CD14-positive monocyte (primary cell): ENCODE measurements at regions of chr19 and their contacts with region 1.

Region 1: GRCh38 chr19:44777715-44778347 is at the start of gene CBLC:
- DNase-seq: no peak
- H3K4me3 ChIP-seq: no peak within 1 kb of the TSS
- H3K4me3 Mint-ChIP-seq: peak within 1 kb of the TSS in 1 of 2 donors; percentile 60
- H3K27ac ChIP-seq: no peak within 1 kb of the TSS
- H3K27ac Mint-ChIP-seq: no peak within 1 kb of the TSS
- H3K4me1 ChIP-seq: no peaks in the 10 kb centered on the region
- H3K4me1 Mint-ChIP-seq: no peaks in the 10 kb centered on the region
- H3K27me3 ChIP-seq: peaks cover 0 to 7% of the 10 kb centered on the region in 2 donors
- H3K27me3 Mint-ChIP-seq: peaks cover 0 to 20% (median 5%) of the 10 kb centered on the region in 3 donors
- CTCF ChIP-seq: no peak
- polyA plus RNA-seq, gene CBLC: not detected

Region 2: GRCh38 chr19:44702551-44703176 is 75.2 kb before region 1 on chr19:
- intact Hi-C with region 1: loop called in 1 of 2 experiments (anchors 5 kb)
- DNase-seq: no peak
- H3K4me3 ChIP-seq: no peak overlapping the region
- H3K4me3 Mint-ChIP-seq: no peak overlapping the region
- H3K27ac ChIP-seq: no peak overlapping the region
- H3K27ac Mint-ChIP-seq: peak overlapping the region in 1 of 7 donors; percentile 30
- H3K4me1 ChIP-seq: no peaks in the 10 kb centered on the region
- H3K4me1 Mint-ChIP-seq: no peaks in the 10 kb centered on the region
- H3K27me3 ChIP-seq: peaks cover 0 to 2% of the 10 kb centered on the region in 2 donors
- H3K27me3 Mint-ChIP-seq: peaks cover 5 to 8% (median 6%) of the 10 kb centered on the region in 3 donors
- CTCF ChIP-seq: no peak

Region 3: GRCh38 chr19:44968118-44968517 is 190.3 kb after region 1 on chr19:
- intact Hi-C with region 1: no loop called
- DNase-seq: no peak
- H3K4me3 ChIP-seq: no peak overlapping the region
- H3K4me3 Mint-ChIP-seq: no peak overlapping the region
- H3K27ac ChIP-seq: no peak overlapping the region
- H3K27ac Mint-ChIP-seq: no peak overlapping the region
- H3K4me1 ChIP-seq: no peaks in the 10 kb centered on the region
- H3K4me1 Mint-ChIP-seq: no peaks in the 10 kb centered on the region
- H3K27me3 ChIP-seq: no peaks in the 10 kb centered on the region
- H3K27me3 Mint-ChIP-seq: peaks cover 0 to 3% (median 0%) of the 10 kb centered on the region in 3 donors
- CTCF ChIP-seq: no peak